CD14-positive monocyte (primary cell): ENCODE measurements at regions of chr14 and their contacts with region 1.

Region 1: DNA sequence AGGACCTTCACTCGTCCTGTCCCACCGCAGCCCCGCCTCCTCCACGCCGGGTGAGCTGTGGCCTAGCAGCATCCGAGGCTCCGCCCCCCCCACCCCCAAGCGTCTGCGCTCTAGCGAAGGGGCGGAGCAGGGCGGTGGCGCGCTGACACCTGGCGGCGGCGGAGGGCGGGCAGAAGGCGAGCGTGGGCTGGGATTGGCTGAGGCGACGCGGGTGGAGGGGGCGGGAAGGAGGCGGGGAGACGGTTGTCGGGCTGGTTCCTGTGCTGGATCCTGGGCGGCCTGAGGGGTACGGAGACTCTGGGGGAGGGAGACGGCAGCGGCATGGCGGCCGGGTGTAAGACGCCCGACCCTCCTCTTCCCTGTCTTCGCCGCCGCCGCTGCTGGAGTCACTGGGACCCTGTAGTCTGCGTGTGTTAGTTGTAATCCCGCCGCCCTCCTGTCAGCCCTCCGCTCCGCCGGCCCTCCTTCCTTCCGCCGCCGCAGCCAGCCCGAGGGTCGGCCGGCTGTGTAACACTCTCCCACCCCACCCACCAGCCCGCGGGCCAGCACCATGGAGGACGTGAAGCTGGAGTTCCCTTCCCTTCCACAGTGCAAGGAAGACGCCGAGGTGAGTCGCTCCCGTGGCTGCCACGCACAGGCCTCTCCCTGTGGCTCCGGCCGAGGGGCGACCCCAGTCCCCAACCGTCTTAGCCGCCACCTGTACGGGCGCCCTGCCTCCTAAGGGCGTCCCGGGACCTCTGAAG is at the start of gene STYX:
- DNase-seq: peak; percentile 93 to 97 (median 94)
- H3K4me3 ChIP-seq: peak within 1 kb of the TSS; percentile 78 to 98 (median 94)
- H3K4me3 Mint-ChIP-seq: peak within 1 kb of the TSS; percentile 94 to 95
- H3K27ac ChIP-seq: peak within 1 kb of the TSS; percentile 71 to 87
- H3K27ac Mint-ChIP-seq: peak within 1 kb of the TSS; percentile 89 to 96 (median 91)
- H3K4me1 ChIP-seq: peaks cover 19 to 22% of the 10 kb centered on the region in 2 donors
- H3K4me1 Mint-ChIP-seq: peaks cover 23% of the 10 kb centered on the region
- H3K27me3 ChIP-seq: no peaks in the 10 kb centered on the region
- H3K27me3 Mint-ChIP-seq: no peaks in the 10 kb centered on the region
- CTCF ChIP-seq: no peak
- polyA plus RNA-seq, gene STYX: 7.3 to 16.7 (median 12.0) TPM

Region 2: GRCh38 chr14:52695481-52696091 is 34.5 kb before region 1 on chr14 and contains the start of gene ERO1A:
- intact Hi-C with region 1: loop called (anchors 5 kb)
- DNase-seq: peak; percentile 76 to 82 (median 76)
- H3K4me3 ChIP-seq: peak within 1 kb of the TSS; percentile 64 to 96 (median 91)
- H3K4me3 Mint-ChIP-seq: peak within 1 kb of the TSS; percentile 94 to 96
- H3K27ac ChIP-seq: peak within 1 kb of the TSS; percentile 80 to 97
- H3K27ac Mint-ChIP-seq: peak within 1 kb of the TSS; percentile 93 to 98 (median 94)
- H3K4me1 ChIP-seq: peaks cover 49 to 62% of the 10 kb centered on the region in 2 donors
- H3K4me1 Mint-ChIP-seq: peaks cover 62% of the 10 kb centered on the region
- H3K27me3 ChIP-seq: no peaks in the 10 kb centered on the region
- H3K27me3 Mint-ChIP-seq: peaks cover 0 to 1% (median 1%) of the 10 kb centered on the region in 3 donors
- CTCF ChIP-seq: no peak
- polyA plus RNA-seq, gene ERO1A: 22.1 to 39.5 (median 29.2) TPM

Region 3: GRCh38 chr14:52791203-52792096 is 61.4 kb after region 1 on chr14 and contains the start of gene GNPNAT1:
- intact Hi-C with region 1: loop called in 1 of 2 experiments (anchors 10 kb)
- DNase-seq: peak; percentile 73 to 78 (median 73)
- H3K4me3 ChIP-seq: peak within 1 kb of the TSS; percentile 57 to 90 (median 84)
- H3K4me3 Mint-ChIP-seq: peak within 1 kb of the TSS; percentile 92 to 94
- H3K27ac ChIP-seq: peak within 1 kb of the TSS; percentile 24 to 64
- H3K27ac Mint-ChIP-seq: peak within 1 kb of the TSS; percentile 71 to 92 (median 82)
- H3K4me1 ChIP-seq: peaks cover 14 to 24% of the 10 kb centered on the region in 2 donors
- H3K4me1 Mint-ChIP-seq: peaks cover 18% of the 10 kb centered on the region
- H3K27me3 ChIP-seq: no peaks in the 10 kb centered on the region
- H3K27me3 Mint-ChIP-seq: peaks cover 1 to 12% (median 2%) of the 10 kb centered on the region in 3 donors
- CTCF ChIP-seq: no peak
- polyA plus RNA-seq, gene GNPNAT1: 1.1 to 3.1 (median 1.9) TPM